ENCODE measurements at regions of chr5 and their contacts with region 1.

Region 1: DNA sequence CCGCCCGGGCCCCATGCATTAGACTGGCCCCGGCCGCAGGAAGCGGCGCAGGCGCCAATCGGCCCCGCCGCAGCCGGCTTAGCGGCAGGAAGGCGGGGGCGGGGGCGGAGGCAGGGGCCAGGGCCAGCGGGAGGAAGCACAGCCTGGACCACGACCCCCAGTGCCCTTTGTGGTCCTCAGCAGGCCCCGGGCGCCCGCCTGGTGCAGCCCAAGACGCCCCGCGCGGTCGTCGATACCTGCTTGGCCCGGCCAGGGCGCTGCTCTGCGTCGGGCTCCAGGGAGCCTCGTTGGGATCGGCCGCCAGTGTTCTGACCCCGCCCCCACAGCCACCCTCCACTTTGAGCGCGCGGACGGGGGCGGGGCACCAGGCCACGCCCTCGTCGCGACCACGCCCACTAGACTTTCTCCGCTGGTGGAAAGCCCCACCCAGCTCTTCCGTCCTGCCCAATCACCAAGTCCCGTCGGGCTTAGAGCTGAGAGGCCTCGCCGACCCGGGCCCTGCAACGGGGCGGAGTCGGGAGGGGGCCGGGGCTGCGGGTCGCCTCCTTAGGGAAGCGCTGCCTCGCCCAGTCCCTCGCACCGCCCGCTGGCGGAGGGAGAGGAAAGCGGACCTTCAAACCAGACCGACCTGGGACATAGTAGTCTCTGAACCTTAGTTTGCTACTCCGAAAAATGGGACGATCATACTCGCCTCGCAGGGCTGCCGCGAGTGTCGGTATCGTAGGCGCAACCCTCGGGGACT is at the start of gene PDLIM7:
- DNase-seq: peak; percentile 99
- H3K4me3 Mint-ChIP-seq: peak within 1 kb of the TSS; percentile 74
- H3K27ac Mint-ChIP-seq: peak within 1 kb of the TSS; percentile 55
- H3K4me1 Mint-ChIP-seq: peaks cover 58% of the 10 kb centered on the region
- H3K27me3 Mint-ChIP-seq: no peaks in the 10 kb centered on the region
- CTCF ChIP-seq: no peak
- total RNA-seq, gene PDLIM7: 164 and 257 TPM in 2 replicates

Region 2: DNA sequence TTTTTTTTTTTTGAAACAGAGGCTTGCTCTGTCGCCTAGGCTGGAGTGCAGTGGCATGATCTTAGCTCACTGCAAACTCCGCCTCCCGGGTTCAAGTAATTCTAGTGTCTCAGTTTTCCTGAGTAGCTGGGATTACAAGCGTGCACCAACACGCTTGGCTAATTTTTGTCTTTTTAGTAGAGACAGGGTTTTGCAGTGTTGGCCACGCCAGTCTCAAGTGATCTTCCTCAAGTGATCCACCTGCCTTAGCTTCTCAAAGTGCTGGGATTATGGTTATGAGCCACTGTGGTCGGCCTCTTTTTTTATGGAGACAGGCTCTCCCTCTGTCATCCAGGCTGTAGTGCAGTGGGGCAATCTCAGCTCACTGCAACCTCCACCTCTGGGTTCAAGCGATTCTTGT is 276.9 kb before region 1 on chr5:
- CTCF ChIA-PET with region 1: no interaction called
- POLR2A ChIA-PET with region 1: no interaction called
- intact Hi-C with region 1: no loop called
- DNase-seq: no peak
- H3K4me3 Mint-ChIP-seq: no peak overlapping the region
- H3K27ac Mint-ChIP-seq: no peak overlapping the region
- H3K4me1 Mint-ChIP-seq: peaks cover 10% of the 10 kb centered on the region
- H3K27me3 Mint-ChIP-seq: no peaks in the 10 kb centered on the region
- CTCF ChIP-seq: no peak

Region 3: GRCh38 chr5:177264178-177264577 is 233.3 kb before region 1 on chr5:
- CTCF ChIA-PET with region 1: no interaction called
- POLR2A ChIA-PET with region 1: no interaction called
- intact Hi-C with region 1: no loop called
- DNase-seq: no peak
- H3K4me3 Mint-ChIP-seq: no peak overlapping the region
- H3K27ac Mint-ChIP-seq: no peak overlapping the region
- H3K4me1 Mint-ChIP-seq: peaks cover 1% of the 10 kb centered on the region
- H3K27me3 Mint-ChIP-seq: no peaks in the 10 kb centered on the region
- CTCF ChIP-seq: no peak

Region 4: GRCh38 chr5:177317959-177318377 is 179.5 kb before region 1 on chr5:
- CTCF ChIA-PET with region 1: interaction called, 15 read pairs
- POLR2A ChIA-PET with region 1: interaction called, 6 read pairs
- intact Hi-C with region 1: loop called (anchors 5 kb)
- DNase-seq: peak; percentile 85
- H3K4me3 Mint-ChIP-seq: no peak overlapping the region
- H3K27ac Mint-ChIP-seq: no peak overlapping the region
- H3K4me1 Mint-ChIP-seq: no peaks in the 10 kb centered on the region
- H3K27me3 Mint-ChIP-seq: no peaks in the 10 kb centered on the region
- CTCF ChIP-seq: peak; percentile 92

Region 5: GRCh38 chr5:177454397-177455035 is 42.9 kb before region 1 on chr5:
- CTCF ChIA-PET with region 1: interaction called, 56 read pairs
- POLR2A ChIA-PET with region 1: interaction called, 15 read pairs
- intact Hi-C with region 1: loop called (anchors 1 kb)
- DNase-seq: peak; percentile 93
- H3K4me3 Mint-ChIP-seq: peak overlapping the region; percentile 70
- H3K27ac Mint-ChIP-seq: no peak overlapping the region
- H3K4me1 Mint-ChIP-seq: peaks cover 6% of the 10 kb centered on the region
- H3K27me3 Mint-ChIP-seq: no peaks in the 10 kb centered on the region
- CTCF ChIP-seq: peak; percentile 98

Region 6: GRCh38 chr5:177478711-177479646 is 18.5 kb before region 1 on chr5:
- CTCF ChIA-PET with region 1: interaction called, 23 read pairs
- POLR2A ChIA-PET with region 1: interaction called, 18 read pairs
- intact Hi-C with region 1: loop called (anchors 2 kb)
- DNase-seq: peak; percentile 71
- H3K4me3 Mint-ChIP-seq: no peak overlapping the region
- H3K27ac Mint-ChIP-seq: peak overlapping the region; percentile 87
- H3K4me1 Mint-ChIP-seq: peaks cover 47% of the 10 kb centered on the region
- H3K27me3 Mint-ChIP-seq: no peaks in the 10 kb centered on the region
- CTCF ChIP-seq: no peak

Region 7: GRCh38 chr5:177516604-177517568 is 19.4 kb after region 1 on chr5 and contains the start of gene DDX41:
- CTCF ChIA-PET with region 1: interaction called, 51 read pairs
- POLR2A ChIA-PET with region 1: interaction called, 17 read pairs
- intact Hi-C with region 1: no loop called
- DNase-seq: peak; percentile 100
- H3K4me3 Mint-ChIP-seq: peak within 1 kb of the TSS; percentile 85
- H3K27ac Mint-ChIP-seq: peak within 1 kb of the TSS; percentile 91
- H3K4me1 Mint-ChIP-seq: peaks cover 34% of the 10 kb centered on the region
- H3K27me3 Mint-ChIP-seq: no peaks in the 10 kb centered on the region
- CTCF ChIP-seq: no peak
- total RNA-seq, gene DDX41: 125 and 135 TPM in 2 replicates

Region 8: GRCh38 chr5:177546258-177546741 is 48.8 kb after region 1 on chr5:
- CTCF ChIA-PET with region 1: interaction called, 19 read pairs
- POLR2A ChIA-PET with region 1: interaction called, 24 read pairs
- intact Hi-C with region 1: loop called (anchors 2 kb)
- DNase-seq: peak; percentile 100
- H3K4me3 Mint-ChIP-seq: peak overlapping the region; percentile 59
- H3K27ac Mint-ChIP-seq: peak overlapping the region; percentile 97
- H3K4me1 Mint-ChIP-seq: peaks cover 51% of the 10 kb centered on the region
- H3K27me3 Mint-ChIP-seq: no peaks in the 10 kb centered on the region
- CTCF ChIP-seq: no peak